ENCODE measurements at regions of chr3 and their contacts with region 1.

Region 1: GRCh38 chr3:176939022-176939817 is 258.1 kb downstream of the TBL1XR1 start:
- DNase-seq: peak; percentile 90
- H3K4me3 Mint-ChIP-seq: no peak overlapping the region
- H3K27ac Mint-ChIP-seq: no peak overlapping the region
- H3K4me1 Mint-ChIP-seq: peaks cover 10% of the 10 kb centered on the region
- H3K27me3 Mint-ChIP-seq: no peaks in the 10 kb centered on the region
- CTCF ChIP-seq: peak; percentile 75

Region 2: DNA sequence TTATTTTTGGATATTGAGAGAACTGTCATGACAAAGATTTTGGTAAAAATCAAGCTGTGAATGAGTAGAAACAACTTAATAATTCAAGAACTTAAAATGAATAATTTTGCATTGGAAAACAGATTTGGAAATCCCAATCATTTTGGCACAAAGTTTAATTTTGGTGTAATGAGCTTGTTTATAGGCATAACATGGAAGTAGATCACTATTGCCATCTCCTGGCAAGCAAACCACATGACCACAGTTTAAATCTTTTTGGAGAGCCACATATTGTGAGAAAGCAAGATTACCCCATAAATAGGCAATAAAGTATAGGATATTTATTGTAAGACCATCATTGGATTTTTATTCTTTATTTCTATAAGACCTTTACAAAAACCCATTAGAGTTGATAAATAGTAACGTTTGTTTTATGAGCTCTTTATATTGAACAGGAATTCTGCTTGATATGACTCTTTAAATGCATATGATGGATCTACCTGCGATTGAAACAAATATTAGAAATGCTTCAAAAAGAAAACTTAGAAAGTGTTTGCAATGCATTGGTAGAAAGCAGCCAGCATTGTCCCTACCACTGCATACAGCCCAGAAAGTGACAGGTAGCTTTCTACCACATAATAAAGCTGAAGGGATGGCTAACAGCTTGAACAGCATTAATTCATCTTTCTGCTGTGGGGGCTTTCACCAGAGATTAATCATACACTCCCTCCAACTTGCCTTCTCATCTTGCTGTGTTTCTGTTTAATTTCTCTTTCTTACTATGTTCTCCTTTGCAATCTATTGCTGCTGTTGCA is 508.8 kb before region 1 on chr3:
- CTCF ChIA-PET with region 1: interaction called, 5 read pairs
- POLR2A ChIA-PET with region 1: no interaction called
- intact Hi-C with region 1: loop called (anchors 2 kb)
- DNase-seq: peak; percentile 61
- H3K4me3 Mint-ChIP-seq: no peak overlapping the region
- H3K27ac Mint-ChIP-seq: no peak overlapping the region
- H3K4me1 Mint-ChIP-seq: no peaks in the 10 kb centered on the region
- H3K27me3 Mint-ChIP-seq: no peaks in the 10 kb centered on the region
- CTCF ChIP-seq: peak; percentile 60

Region 3: DNA sequence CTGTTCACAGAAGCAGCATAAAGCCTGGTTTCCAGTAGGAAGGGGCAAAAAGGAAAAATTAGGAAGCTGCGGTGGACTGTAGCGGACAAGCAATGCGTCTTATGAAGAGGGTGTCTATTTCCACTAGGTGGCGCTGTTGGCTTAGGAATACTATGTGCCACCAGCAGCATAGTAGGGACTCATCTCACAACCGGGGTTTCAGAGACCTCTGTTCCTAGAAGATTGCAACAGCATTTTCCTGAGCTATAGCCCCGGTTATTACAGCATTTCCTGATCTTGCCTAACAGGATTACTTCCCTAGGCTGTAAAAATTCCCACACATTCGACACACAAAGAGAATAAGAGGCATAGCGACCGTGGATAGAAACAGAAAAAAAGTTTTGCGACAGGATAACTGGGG is 424.9 kb before region 1 on chr3:
- CTCF ChIA-PET with region 1: interaction called, 5 read pairs
- POLR2A ChIA-PET with region 1: no interaction called
- intact Hi-C with region 1: loop called (anchors 1 kb)
- DNase-seq: peak; percentile 54
- H3K4me3 Mint-ChIP-seq: no peak overlapping the region
- H3K27ac Mint-ChIP-seq: no peak overlapping the region
- H3K4me1 Mint-ChIP-seq: no peaks in the 10 kb centered on the region
- H3K27me3 Mint-ChIP-seq: no peaks in the 10 kb centered on the region
- CTCF ChIP-seq: peak; percentile 69

Region 4: DNA sequence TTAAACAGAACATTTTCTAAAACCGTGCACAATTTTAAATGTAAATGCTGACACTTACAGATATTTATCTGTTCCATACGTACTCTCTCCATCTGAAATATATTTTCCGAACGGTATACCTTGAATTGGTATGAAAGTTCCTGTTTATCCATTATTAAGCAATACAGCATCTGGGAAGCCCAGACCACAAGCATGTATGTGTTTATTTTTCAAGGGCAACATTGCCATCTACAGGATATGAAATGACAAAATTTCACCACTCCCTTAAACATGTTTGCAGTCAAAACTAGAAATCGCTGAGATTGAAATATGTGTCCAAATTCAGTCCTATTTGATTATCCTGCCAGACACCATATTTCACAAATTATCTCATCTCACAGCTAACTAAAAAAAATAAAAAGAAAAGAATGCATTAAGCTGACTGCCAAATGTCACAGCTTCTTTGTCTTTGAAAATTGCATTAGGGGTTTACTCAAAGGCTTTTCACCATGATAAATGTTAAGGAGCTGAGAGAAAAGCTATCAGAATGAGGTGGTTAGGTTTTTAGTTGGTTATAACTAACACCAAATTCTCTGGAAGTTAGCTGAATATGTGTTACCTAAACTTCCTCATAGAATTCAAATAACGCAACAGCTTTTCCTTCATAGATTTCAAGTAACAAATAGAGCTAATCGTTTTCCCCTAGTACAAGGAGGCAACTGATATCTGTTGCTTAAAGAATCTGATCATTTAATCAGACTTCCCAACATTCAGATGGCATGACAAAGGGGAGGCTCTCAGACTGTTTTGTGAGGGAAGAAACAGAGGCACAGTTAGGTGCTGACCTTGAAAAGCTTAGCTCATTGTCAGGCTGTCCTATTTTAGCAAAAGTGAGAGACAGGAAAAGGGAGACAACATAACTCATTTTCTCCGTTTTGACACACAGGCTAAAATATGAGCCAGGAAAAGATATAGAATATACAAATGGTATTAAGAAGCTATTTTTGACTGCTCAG is 275.1 kb before region 1 on chr3:
- CTCF ChIA-PET with region 1: interaction called, 13 read pairs
- POLR2A ChIA-PET with region 1: no interaction called
- intact Hi-C with region 1: loop called (anchors 2 kb)
- DNase-seq: peak; percentile 78
- H3K4me3 Mint-ChIP-seq: no peak overlapping the region
- H3K27ac Mint-ChIP-seq: no peak overlapping the region
- H3K4me1 Mint-ChIP-seq: no peaks in the 10 kb centered on the region
- H3K27me3 Mint-ChIP-seq: no peaks in the 10 kb centered on the region
- CTCF ChIP-seq: peak; percentile 49

Region 5: GRCh38 chr3:176872771-176873209 is 66.4 kb before region 1 on chr3:
- CTCF ChIA-PET with region 1: interaction called, 34 read pairs
- POLR2A ChIA-PET with region 1: interaction called, 3 read pairs
- intact Hi-C with region 1: loop called (anchors 1 kb)
- DNase-seq: peak; percentile 70
- H3K4me3 Mint-ChIP-seq: no peak overlapping the region
- H3K27ac Mint-ChIP-seq: peak overlapping the region; percentile 16
- H3K4me1 Mint-ChIP-seq: peaks cover 18% of the 10 kb centered on the region
- H3K27me3 Mint-ChIP-seq: no peaks in the 10 kb centered on the region
- CTCF ChIP-seq: peak; percentile 64

Region 6: DNA sequence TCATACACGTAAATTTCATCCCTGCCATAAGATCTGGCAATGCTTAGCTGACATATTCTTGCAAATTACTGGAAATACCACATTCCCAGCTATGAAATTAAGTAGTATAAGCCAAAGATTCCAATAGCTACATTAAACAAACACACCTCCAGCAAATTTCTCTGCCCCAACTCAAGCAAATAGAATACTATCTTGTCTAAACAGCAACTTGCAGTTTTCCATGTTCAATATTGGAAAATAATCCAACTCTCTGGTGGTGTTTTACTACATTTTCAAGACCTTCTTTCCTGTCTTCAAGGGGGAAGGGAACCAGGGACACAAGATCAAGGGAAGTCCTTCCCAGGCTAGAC is 10.7 kb before region 1 on chr3:
- CTCF ChIA-PET with region 1: interaction called, 11 read pairs
- POLR2A ChIA-PET with region 1: no interaction called
- intact Hi-C with region 1: no loop called
- DNase-seq: no peak
- H3K4me3 Mint-ChIP-seq: no peak overlapping the region
- H3K27ac Mint-ChIP-seq: no peak overlapping the region
- H3K4me1 Mint-ChIP-seq: no peaks in the 10 kb centered on the region
- H3K27me3 Mint-ChIP-seq: no peaks in the 10 kb centered on the region
- CTCF ChIP-seq: no peak

Region 7: DNA sequence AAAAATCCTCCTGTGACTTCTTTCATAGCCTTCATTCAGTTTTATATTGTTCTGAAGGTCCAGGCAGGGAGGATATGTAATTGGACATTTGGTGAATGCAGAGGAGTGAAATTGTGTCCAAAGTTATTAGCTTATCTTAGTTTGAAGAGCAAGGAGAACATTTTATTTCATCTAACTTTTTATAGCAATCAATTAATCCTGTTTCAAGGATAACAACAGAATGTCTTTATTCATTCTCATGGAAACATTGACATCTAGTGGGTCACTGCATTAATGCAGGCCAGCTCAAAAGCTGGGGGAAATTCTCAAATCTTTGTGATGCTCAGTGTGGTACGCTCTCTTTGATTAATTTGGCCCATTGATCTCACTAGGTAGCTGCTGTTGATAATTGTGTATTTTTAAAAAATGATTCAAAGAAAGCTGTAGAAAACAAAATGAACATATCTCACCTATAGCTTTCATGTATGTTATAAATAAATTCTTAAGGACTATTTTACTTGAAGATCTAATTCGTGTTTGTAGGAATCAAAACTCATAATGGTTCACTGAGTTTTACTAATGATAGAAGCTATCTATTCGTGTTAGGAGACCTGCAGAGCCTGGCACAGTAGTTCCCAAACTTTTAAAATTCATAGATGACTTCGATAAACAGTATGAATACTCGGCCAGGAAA is 1446.2 kb after region 1 on chr3:
- CTCF ChIA-PET with region 1: no interaction called
- POLR2A ChIA-PET with region 1: no interaction called
- intact Hi-C with region 1: loop called (anchors 1 kb)
- DNase-seq: peak; percentile 51
- H3K4me3 Mint-ChIP-seq: no peak overlapping the region
- H3K27ac Mint-ChIP-seq: no peak overlapping the region
- H3K4me1 Mint-ChIP-seq: peaks cover 18% of the 10 kb centered on the region
- H3K27me3 Mint-ChIP-seq: no peaks in the 10 kb centered on the region
- CTCF ChIP-seq: peak; percentile 69